Activated CD4-positive, alpha-beta memory T cell treated with anti-CD3 and anti-CD28 coated beads, Interleukin-2, amount 10 ng/mL, durations not matched to agents 7 days and 5 days (primary cell): ENCODE measurements at regions of chr11 and their contacts with region 1.

Region 1: DNA sequence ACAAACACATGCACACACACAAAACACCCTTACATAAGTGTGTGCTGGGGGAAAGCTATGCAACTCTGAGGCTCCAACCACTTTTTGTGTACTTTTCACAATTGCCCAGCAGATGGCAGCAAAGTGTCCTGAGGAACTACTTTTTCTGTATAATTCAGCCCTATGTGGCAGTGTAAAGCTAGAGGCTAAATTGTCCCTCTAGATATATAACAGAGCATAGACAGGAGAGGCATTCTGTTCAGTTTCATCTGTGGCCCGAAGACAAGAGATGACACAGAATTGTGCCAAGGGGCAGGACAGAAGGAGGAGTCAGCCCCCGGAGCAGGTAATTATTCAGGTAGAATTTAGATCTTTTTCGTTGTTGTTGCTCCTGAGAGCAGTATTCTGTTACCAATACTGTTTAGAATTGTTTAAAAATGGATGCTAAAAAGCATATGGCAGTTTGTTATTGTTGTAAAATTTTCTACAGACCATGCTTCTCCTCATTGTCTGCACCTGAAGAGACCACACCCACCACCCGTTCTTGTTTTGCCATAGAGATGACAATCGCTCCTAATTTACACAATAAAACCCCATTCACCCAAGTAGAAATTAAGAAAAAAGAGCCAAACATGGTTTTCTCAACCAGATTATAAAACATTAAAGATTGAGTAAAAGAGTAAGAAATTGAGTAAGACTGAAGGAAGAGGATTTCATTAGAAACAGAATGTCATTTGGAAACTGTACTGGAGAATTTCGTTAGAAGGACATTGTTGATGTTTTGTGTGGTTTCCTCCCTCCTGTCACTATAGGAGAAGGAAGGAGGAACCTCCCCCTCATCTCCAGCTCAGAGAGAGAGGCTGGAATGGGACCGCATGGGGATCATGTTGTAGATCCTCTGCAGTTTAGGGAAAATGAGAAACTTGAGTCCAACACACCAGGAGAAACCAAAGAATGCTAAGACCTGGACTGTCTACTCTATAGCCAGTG is 14.5 kb upstream of the MS4A7 start:
- DNase-seq: peak; percentile 55
- H3K4me3 Mint-ChIP-seq: no peak overlapping the region
- H3K27ac Mint-ChIP-seq: no peak overlapping the region
- H3K4me1 Mint-ChIP-seq: peaks cover 2% of the 10 kb centered on the region
- H3K27me3 Mint-ChIP-seq: peaks cover 26% of the 10 kb centered on the region

Region 2: DNA sequence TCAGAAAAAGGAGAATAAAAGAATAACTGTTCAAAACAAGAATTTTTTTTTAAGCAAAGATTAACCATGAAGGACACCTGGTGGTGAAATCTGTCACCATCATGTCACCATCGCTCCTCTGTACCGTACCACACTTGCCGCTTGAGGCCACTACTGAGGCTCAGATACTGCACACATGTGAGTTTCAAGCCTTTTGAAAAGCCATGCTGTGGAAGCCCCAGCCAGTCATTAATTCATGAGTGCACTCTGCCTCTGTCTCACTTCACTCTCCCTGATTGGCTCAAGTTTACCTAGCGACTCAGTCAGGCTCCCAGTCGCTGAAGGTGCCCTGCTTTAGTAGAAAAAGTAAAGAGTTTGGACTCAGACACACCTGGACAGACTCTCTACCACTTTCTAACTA is 122.2 kb after region 1 on chr11:
- CTCF ChIA-PET with region 1: interaction called, 17 read pairs
- POLR2A ChIA-PET with region 1: no interaction called
- DNase-seq: peak; percentile 23
- H3K4me3 Mint-ChIP-seq: no peak overlapping the region
- H3K27ac Mint-ChIP-seq: no peak overlapping the region
- H3K4me1 Mint-ChIP-seq: peaks cover 9% of the 10 kb centered on the region
- H3K27me3 Mint-ChIP-seq: peaks cover 6% of the 10 kb centered on the region

Region 3: GRCh38 chr11:60625262-60625661 is 261.4 kb after region 1 on chr11:
- CTCF ChIA-PET with region 1: interaction called, 18 read pairs
- POLR2A ChIA-PET with region 1: no interaction called
- DNase-seq: no peak
- H3K4me3 Mint-ChIP-seq: no peak overlapping the region
- H3K27ac Mint-ChIP-seq: no peak overlapping the region
- H3K4me1 Mint-ChIP-seq: no peaks in the 10 kb centered on the region
- H3K27me3 Mint-ChIP-seq: peaks cover 2% of the 10 kb centered on the region